PC-9 (cell line): ENCODE measurements at regions of chr3 and their contacts with region 1.

Region 1: GRCh38 chr3:197820550-197821335 is 29.7 kb downstream of the LRCH3 start:
- DNase-seq: no peak
- H3K4me3 ChIP-seq: no peak overlapping the region
- H3K27ac ChIP-seq: 0 out of 2 replicates have a peak overlapping the region, but pooled peaks have one; percentile 3
- H3K4me1 ChIP-seq: no peaks in the 10 kb centered on the region
- H3K27me3 ChIP-seq: no peaks in the 10 kb centered on the region
- CTCF ChIP-seq: no peak

Region 2: GRCh38 chr3:197031315-197032285 is 789.1 kb before region 1 on chr3:
- CTCF ChIA-PET with region 1: no interaction called
- POLR2A ChIA-PET with region 1: no interaction called
- intact Hi-C with region 1: no loop called
- DNase-seq: peak; percentile 95 to 100
- H3K4me3 ChIP-seq: no peak overlapping the region
- H3K27ac ChIP-seq: peak overlapping the region; percentile 90
- H3K4me1 ChIP-seq: peaks cover 19% of the 10 kb centered on the region
- H3K27me3 ChIP-seq: no peaks in the 10 kb centered on the region
- CTCF ChIP-seq: no peak

Region 3: GRCh38 chr3:197554562-197555280 is 266.0 kb before region 1 on chr3:
- CTCF ChIA-PET with region 1: no interaction called
- POLR2A ChIA-PET with region 1: no interaction called
- intact Hi-C with region 1: no loop called
- DNase-seq: peak; percentile 94 to 99
- H3K4me3 ChIP-seq: peak overlapping the region; percentile 75
- H3K27ac ChIP-seq: peak overlapping the region; percentile 34
- H3K4me1 ChIP-seq: peaks cover 14% of the 10 kb centered on the region
- H3K27me3 ChIP-seq: no peaks in the 10 kb centered on the region
- CTCF ChIP-seq: peak; percentile 68; the same call in 1 of the 2 replicates

Region 4: GRCh38 chr3:197801891-197802778 is 18.6 kb before region 1 on chr3:
- CTCF ChIA-PET with region 1: interaction called, 10 read pairs
- POLR2A ChIA-PET with region 1: interaction called, 3 read pairs
- intact Hi-C with region 1: no loop called
- DNase-seq: no peak
- H3K4me3 ChIP-seq: no peak overlapping the region
- H3K27ac ChIP-seq: peak overlapping the region; percentile 2; the same call in 1 of the 2 replicates
- H3K4me1 ChIP-seq: no peaks in the 10 kb centered on the region
- H3K27me3 ChIP-seq: no peaks in the 10 kb centered on the region
- CTCF ChIP-seq: peak; percentile 77